Dorsolateral prefrontal cortex (tissue), 120 donors: ENCODE measurements at regions of chr6 and their contacts with region 1.

Region 1: GRCh38 chr6:41941280-41942066 is at the start of gene CCND3:
- DNase-seq: peak; percentile 77 to 96 (median 91)
- H3K4me3 ChIP-seq: peak within 1 kb of the TSS; percentile 66 to 97 (median 88)
- H3K27ac ChIP-seq: peak within 1 kb of the TSS; percentile 27 to 94 (median 84)
- H3K27me3 ChIP-seq: no peaks in the 10 kb centered on the region
- CTCF ChIP-seq: peak in 22 of 56 donors; percentile 1 to 51 (median 19)
- total RNA-seq, gene CCND3: 55.7 to 135 (median 83.5) TPM

Region 2: DNA sequence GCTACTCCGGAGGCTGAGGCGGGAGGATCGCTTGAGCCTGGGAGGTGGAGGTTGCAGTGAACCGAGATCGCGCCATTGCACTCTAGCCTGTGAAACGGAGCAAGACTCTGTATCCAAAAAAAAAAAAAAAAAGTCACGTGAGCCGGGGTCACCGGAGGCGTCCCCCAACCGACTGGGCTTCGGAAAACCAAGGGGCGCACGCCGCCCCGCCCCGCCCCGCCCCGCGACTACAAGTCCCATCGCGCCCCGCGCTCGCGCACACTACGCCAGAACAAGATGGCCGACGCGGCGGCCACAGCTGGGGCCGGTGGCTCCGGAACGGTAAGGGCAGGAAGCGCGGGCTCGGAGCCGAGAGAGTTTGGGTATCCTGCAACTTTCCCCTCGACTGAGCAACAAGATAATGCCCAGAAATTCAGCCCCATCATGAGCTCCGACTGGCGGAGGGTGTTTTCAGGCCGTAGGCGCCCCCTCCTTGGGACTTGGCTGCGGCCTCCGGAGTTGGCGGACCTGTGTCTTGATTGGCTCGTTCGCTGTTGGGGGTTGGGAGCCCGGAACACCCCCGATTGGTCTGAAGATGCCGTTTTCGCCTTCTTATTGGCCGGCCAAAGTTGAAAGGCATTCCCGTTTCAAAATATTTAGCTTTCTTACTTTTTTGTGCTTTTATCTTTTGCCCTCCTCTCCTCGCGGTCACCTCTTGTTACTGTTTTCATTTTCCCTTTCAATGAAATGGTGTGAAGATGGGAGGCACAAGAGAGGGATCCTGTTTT is 109.0 kb after region 1 on chr6 and contains the start of gene TAF8:
- intact Hi-C with region 1: loop called (anchors 2 kb)
- DNase-seq: peak; percentile 84 to 94 (median 92)
- H3K4me3 ChIP-seq: peak within 1 kb of the TSS; percentile 46 to 95 (median 78)
- H3K27ac ChIP-seq: peak within 1 kb of the TSS; percentile 84 to 100 (median 96)
- H3K27me3 ChIP-seq: no peaks in the 10 kb centered on the region
- CTCF ChIP-seq: peak in 35 of 56 donors; percentile 5 to 64 (median 35)
- total RNA-seq, gene TAF8: 17.7 to 55.8 (median 29.5) TPM